ENCODE measurements at regions of chr19 and their contacts with region 1.

Region 1: GRCh38 chr19:49869441-49870176 is 2.2 kb upstream of the PNKP start:
- DNase-seq: peak; percentile 98

Region 2: DNA sequence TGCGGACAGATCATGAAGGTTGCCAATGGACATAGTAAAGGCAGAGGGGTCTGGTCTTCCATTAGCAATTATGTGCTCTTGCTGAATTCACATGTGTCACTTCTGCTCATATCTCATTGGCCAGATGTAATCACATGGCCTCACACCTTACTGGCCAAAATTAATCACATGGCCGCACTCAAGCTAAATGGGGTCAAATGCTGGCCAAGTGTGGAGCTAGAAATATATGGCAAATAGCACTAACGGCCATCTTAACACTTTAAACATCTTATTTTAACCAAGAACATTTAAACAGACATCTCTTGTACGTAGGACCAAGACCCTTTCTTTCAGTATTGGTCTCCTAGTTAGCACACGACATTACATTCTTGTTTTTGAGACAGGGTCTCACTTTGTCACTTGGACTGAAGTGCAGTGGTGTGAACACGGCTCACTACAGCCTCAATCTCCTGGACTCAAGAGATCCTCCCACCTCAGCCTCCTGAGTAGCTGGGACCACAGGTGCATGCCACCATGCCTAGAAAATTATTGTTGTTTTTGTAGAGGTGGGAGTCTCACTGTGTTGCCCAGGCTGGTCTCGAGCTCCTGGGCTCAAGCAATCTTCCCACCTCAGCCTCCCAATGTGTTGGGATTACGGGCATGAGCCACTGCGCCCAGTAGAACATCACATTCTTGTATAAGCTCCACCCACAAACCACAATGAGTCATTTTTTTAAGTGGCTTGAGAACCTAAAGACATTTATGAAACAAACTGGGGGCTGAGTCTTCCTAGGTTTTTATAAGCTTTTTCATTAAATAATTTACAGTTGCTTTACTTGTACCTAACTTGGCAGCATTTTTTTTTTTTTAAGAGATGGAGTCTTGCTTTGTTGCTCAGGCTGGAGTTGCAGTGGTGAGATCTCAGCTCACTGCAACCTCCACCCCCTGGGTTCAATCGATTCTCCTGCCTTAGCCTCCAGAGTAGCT is 21.6 kb before region 1 on chr19:
- intact Hi-C with region 1: loop called in 1 of 2 experiments (anchors 1 kb)
- DNase-seq: no peak

Region 3: GRCh38 chr19:49929611-49930482 is 60.2 kb after region 1 on chr19:
- intact Hi-C with region 1: no loop called
- DNase-seq: peak; percentile 96

Measured in posterior vena cava (tissue), 2 donors.